ENCODE measurements at regions of chr1 and their contacts with region 1.

Region 1: GRCh38 chr1:219209578-219209977 is 35.9 kb downstream of the LYPLAL1 start:
- DNase-seq: peak; percentile 23
- ATAC-seq: peak; percentile 48
- H3K4me3 ChIP-seq: no peak overlapping the region
- H3K27ac ChIP-seq: peak overlapping the region; percentile 3
- H3K4me1 ChIP-seq: peaks cover 16% of the 10 kb centered on the region
- H3K27me3 ChIP-seq: no peaks in the 10 kb centered on the region
- CTCF ChIP-seq: no peak

Region 2: GRCh38 chr1:219113261-219113660 is 96.3 kb before region 1 on chr1:
- CTCF ChIA-PET with region 1: no interaction called
- POLR2A ChIA-PET with region 1: no interaction called
- intact Hi-C with region 1: no loop called
- DNase-seq: no peak
- ATAC-seq: no peak
- H3K4me3 ChIP-seq: no peak overlapping the region
- H3K27ac ChIP-seq: no peak overlapping the region
- H3K4me1 ChIP-seq: no peaks in the 10 kb centered on the region
- H3K27me3 ChIP-seq: no peaks in the 10 kb centered on the region
- CTCF ChIP-seq: no peak

Region 3: DNA sequence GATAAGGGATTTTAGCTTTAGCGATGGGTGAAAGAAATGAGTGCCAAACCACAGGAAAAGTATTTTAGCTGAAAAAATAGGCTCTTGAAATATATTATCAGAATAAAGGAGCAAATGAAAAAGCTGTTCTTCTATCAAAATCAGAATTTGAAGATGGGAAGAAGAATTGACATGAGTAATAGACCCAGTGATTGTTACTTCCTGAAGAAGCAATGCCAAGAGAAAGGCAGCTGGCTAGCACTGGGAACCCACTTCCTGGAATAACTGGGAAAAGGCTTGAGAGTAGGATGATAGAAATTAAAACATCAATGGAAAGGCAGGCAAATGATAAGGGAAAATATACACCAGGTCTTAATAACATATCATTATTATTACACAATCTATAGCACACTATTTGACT is 65.8 kb before region 1 on chr1:
- CTCF ChIA-PET with region 1: no interaction called
- POLR2A ChIA-PET with region 1: no interaction called
- intact Hi-C with region 1: no loop called
- DNase-seq: peak; percentile 69
- ATAC-seq: peak; percentile 88
- H3K4me3 ChIP-seq: no peak overlapping the region
- H3K27ac ChIP-seq: no peak overlapping the region
- H3K4me1 ChIP-seq: peaks cover 10% of the 10 kb centered on the region
- H3K27me3 ChIP-seq: no peaks in the 10 kb centered on the region
- CTCF ChIP-seq: no peak

Region 4: GRCh38 chr1:219257751-219258150 is 48.2 kb after region 1 on chr1:
- CTCF ChIA-PET with region 1: no interaction called
- POLR2A ChIA-PET with region 1: no interaction called
- intact Hi-C with region 1: no loop called
- DNase-seq: no peak
- ATAC-seq: no peak
- H3K4me3 ChIP-seq: no peak overlapping the region
- H3K27ac ChIP-seq: no peak overlapping the region
- H3K4me1 ChIP-seq: no peaks in the 10 kb centered on the region
- H3K27me3 ChIP-seq: no peaks in the 10 kb centered on the region
- CTCF ChIP-seq: no peak

Region 5: GRCh38 chr1:219317762-219318353 is 108.3 kb after region 1 on chr1:
- CTCF ChIA-PET with region 1: no interaction called
- POLR2A ChIA-PET with region 1: no interaction called
- intact Hi-C with region 1: loop called (anchors 1 kb)
- DNase-seq: peak; percentile 82
- ATAC-seq: peak; percentile 59
- H3K4me3 ChIP-seq: no peak overlapping the region
- H3K27ac ChIP-seq: no peak overlapping the region
- H3K4me1 ChIP-seq: peaks cover 16% of the 10 kb centered on the region
- H3K27me3 ChIP-seq: no peaks in the 10 kb centered on the region
- CTCF ChIP-seq: peak; percentile 98

Region 6: DNA sequence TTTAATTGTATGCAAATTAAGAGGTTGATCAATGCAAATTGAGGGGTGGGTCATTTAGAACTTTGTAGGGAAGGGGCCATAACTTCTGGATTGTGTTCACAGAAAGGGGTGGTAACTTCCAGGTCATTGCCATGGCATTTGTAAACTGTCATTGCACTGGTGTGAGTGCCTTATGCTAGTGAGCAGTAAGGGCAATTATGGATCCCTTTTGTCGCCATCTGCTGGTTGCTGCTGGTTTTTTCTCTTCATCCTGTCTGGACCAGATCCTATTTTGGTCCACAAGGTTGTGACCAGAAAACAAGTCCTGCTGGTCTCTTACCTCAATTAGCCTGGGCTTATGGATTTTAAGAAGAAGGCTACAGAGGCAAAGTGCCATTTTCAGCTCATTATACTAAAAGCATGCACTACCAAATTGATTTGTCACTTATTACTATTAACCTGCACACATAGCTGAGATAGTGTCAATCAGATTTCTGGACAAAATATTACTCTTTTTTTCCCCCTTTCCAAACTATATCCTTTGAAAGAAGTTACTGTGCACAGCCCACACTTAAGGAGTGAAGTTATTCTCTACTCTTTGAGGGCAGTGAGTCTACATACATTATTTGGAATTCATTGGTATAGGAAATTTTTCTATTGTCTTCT is 207.1 kb after region 1 on chr1:
- CTCF ChIA-PET with region 1: no interaction called
- POLR2A ChIA-PET with region 1: no interaction called
- intact Hi-C with region 1: loop called (anchors 1 kb)
- DNase-seq: peak; percentile 91
- ATAC-seq: peak; percentile 81
- H3K4me3 ChIP-seq: no peak overlapping the region
- H3K27ac ChIP-seq: no peak overlapping the region
- H3K4me1 ChIP-seq: peaks cover 14% of the 10 kb centered on the region
- H3K27me3 ChIP-seq: no peaks in the 10 kb centered on the region
- CTCF ChIP-seq: peak; percentile 96